K562 (cell line): ENCODE measurements at regions of chr11 and their contacts with region 1.

Region 1: DNA sequence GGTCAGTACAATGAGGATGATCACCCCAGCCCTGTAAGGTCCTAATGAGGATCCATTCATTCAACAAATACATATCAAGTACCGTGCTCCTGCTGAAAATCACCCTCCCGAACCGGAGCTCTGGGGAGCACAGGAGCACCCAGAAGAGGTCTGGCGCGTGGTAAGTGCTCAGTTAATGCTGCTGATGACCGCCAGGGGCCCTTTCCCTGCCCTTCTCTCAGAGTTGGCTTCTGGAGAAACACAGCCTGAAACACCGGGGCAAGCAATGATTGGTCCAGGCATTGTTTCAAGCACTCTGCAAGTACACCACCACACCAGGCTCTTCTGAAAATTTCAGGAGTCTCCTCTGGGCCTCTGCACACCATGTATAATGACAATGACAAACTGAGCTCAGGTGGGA is 3.8 kb upstream of the CCDC86 start:
- DNase-seq: peak; percentile 61 to 71 (median 67)
- ATAC-seq: peak; percentile 78
- H3K4me3 ChIP-seq: no peak overlapping the region
- H3K27ac ChIP-seq: no peak overlapping the region
- H3K4me1 ChIP-seq: peaks cover 19 to 27% of the 10 kb centered on the region in 2 experiments
- H3K27me3 ChIP-seq: no peaks in the 10 kb centered on the region
- CTCF ChIP-seq: peak; percentile 67 to 74 (median 72)
- EP300 ChIP-seq: no peak
- POLR2A ChIP-seq: no peak
- RAD21 ChIP-seq: peak in 1 of 2 experiments; percentile 61; a peak in 2 of 4 replicates

Region 2: DNA sequence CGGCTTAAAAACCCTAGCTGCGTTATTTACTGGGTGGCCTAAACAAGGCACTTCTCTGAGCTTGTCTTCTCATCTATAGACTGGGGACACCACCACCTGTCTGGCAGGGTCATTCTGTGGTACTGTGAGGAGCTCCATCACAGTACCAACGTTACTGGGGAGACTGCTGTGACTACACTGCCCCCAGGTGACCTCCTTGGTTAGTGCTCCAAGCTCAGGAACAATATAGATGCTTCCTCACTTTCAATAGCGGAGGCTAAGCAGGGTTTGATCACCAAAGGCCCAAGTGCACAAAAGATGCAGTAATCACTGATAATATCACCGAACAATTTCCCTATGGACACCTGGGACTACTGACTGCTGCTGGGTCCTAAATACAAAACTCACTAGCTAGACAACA is 49.4 kb after region 1 on chr11:
- CTCF ChIA-PET with region 1: interaction called, 59 read pairs
- POLR2A ChIA-PET with region 1: interaction called, 4 read pairs
- in situ Hi-C with region 1: loop called (anchors 5 kb)
- intact Hi-C with region 1: no loop called
- DNase-seq: peak; percentile 66 to 75 (median 74)
- ATAC-seq: peak; percentile 89
- H3K4me3 ChIP-seq: no peak overlapping the region
- H3K27ac ChIP-seq: no peak overlapping the region
- H3K4me1 ChIP-seq: peaks cover 7 to 30% of the 10 kb centered on the region in 2 experiments
- H3K27me3 ChIP-seq: no peaks in the 10 kb centered on the region
- CTCF ChIP-seq: peak; percentile 85 to 96 (median 91)
- EP300 ChIP-seq: no peak
- POLR2A ChIP-seq: no peak
- RAD21 ChIP-seq: peak; percentile 93 to 98

Region 3: GRCh38 chr11:60977224-60977623 is 139.1 kb after region 1 on chr11:
- CTCF ChIA-PET with region 1: no interaction called
- POLR2A ChIA-PET with region 1: no interaction called
- in situ Hi-C with region 1: no loop called
- intact Hi-C with region 1: no loop called
- DNase-seq: no peak
- ATAC-seq: no peak
- H3K4me3 ChIP-seq: no peak overlapping the region
- H3K27ac ChIP-seq: no peak overlapping the region
- H3K4me1 ChIP-seq: no peaks in the 10 kb centered on the region
- H3K27me3 ChIP-seq: peaks cover 40 to 70% of the 10 kb centered on the region in 2 experiments
- CTCF ChIP-seq: no peak
- EP300 ChIP-seq: no peak
- POLR2A ChIP-seq: no peak
- RAD21 ChIP-seq: no peak

Region 4: GRCh38 chr11:61173456-61173855 is 335.3 kb after region 1 on chr11:
- CTCF ChIA-PET with region 1: no interaction called
- POLR2A ChIA-PET with region 1: no interaction called
- in situ Hi-C with region 1: loop called (anchors 5 kb)
- intact Hi-C with region 1: no loop called
- DNase-seq: peak in 3 of 4 experiments; percentile 21 to 57 (median 46)
- ATAC-seq: peak; percentile 89
- H3K4me3 ChIP-seq: no peak overlapping the region
- H3K27ac ChIP-seq: no peak overlapping the region
- H3K4me1 ChIP-seq: no peaks in the 10 kb centered on the region; a peak in 1 of 5 replicates
- H3K27me3 ChIP-seq: peaks cover 26 to 45% of the 10 kb centered on the region in 2 experiments
- CTCF ChIP-seq: peak; percentile 64 to 79 (median 75)
- EP300 ChIP-seq: no peak
- POLR2A ChIP-seq: no peak
- RAD21 ChIP-seq: peak; percentile 44 to 83